Calu3 (cell line): ENCODE measurements at regions of chr1 and their contacts with region 1.

Region 1: GRCh38 chr1:234963180-234963903 is 165.3 kb downstream of the TOMM20 start:
- DNase-seq: peak; percentile 89
- H3K4me3 Mint-ChIP-seq: peak overlapping the region; percentile 15
- H3K27ac Mint-ChIP-seq: peak overlapping the region; percentile 86
- H3K4me1 Mint-ChIP-seq: peaks cover 73% of the 10 kb centered on the region
- H3K27me3 Mint-ChIP-seq: no peaks in the 10 kb centered on the region
- CTCF ChIP-seq: no peak

Region 2: GRCh38 chr1:234610348-234611152 is 352.8 kb before region 1 on chr1:
- CTCF ChIA-PET with region 1: interaction called, 3 read pairs
- intact Hi-C with region 1: loop called (anchors 2 kb)
- DNase-seq: peak; percentile 96
- H3K4me3 Mint-ChIP-seq: peak overlapping the region; percentile 89
- H3K27ac Mint-ChIP-seq: peak overlapping the region; percentile 97
- H3K4me1 Mint-ChIP-seq: peaks cover 53% of the 10 kb centered on the region
- H3K27me3 Mint-ChIP-seq: no peaks in the 10 kb centered on the region
- CTCF ChIP-seq: no peak

Region 3: GRCh38 chr1:234875953-234876855 is 87.1 kb before region 1 on chr1:
- CTCF ChIA-PET with region 1: no interaction called
- intact Hi-C with region 1: loop called (anchors 5 kb)
- DNase-seq: peak; percentile 42
- H3K4me3 Mint-ChIP-seq: no peak overlapping the region
- H3K27ac Mint-ChIP-seq: peak overlapping the region; percentile 36
- H3K4me1 Mint-ChIP-seq: peaks cover 52% of the 10 kb centered on the region
- H3K27me3 Mint-ChIP-seq: no peaks in the 10 kb centered on the region
- CTCF ChIP-seq: no peak

Region 4: DNA sequence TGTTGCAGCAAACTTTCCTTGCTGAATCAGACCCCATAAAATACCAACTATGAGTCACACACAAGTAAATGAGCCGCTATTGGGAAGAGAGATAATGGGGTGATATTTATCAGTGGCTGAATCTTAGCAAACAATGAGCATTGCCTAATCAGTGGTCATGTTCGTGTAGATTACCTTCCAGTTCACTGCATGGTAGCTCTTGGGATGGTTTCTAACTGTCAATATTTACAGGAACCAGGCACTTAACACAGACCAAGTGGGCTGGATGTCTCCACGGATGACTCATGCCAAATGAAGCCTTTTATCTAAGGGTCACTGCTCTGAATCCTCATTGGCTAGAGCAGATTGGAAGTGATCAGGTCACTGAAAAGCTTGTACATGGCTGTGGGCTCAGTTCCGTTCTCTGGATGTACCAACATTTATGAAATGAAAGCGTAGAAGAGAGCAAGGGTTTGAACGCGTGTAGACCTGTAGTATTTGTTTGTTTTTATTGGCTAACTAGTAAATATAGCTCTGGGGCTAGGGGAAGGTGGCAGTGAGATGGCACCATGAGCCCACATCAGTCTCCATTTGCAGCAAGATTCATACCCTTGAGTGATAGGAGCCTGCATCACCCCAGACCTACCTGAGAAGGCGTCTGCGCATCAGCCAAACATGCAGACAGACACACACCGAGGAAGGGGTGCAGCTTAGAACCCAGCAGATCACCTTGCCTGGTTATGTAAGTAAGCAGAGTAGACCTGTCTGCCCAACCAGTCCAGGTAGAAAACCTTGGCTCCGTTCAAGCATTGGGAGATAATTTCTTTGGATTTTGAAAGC is 12.0 kb after region 1 on chr1:
- CTCF ChIA-PET with region 1: interaction called, 13 read pairs
- intact Hi-C with region 1: no loop called
- DNase-seq: no peak
- H3K4me3 Mint-ChIP-seq: no peak overlapping the region
- H3K27ac Mint-ChIP-seq: peak overlapping the region; percentile 47
- H3K4me1 Mint-ChIP-seq: peaks cover 71% of the 10 kb centered on the region
- H3K27me3 Mint-ChIP-seq: no peaks in the 10 kb centered on the region
- CTCF ChIP-seq: no peak

Region 5: GRCh38 chr1:235006132-235006943 is 43.0 kb after region 1 on chr1:
- CTCF ChIA-PET with region 1: no interaction called
- intact Hi-C with region 1: no loop called
- DNase-seq: no peak
- H3K4me3 Mint-ChIP-seq: no peak overlapping the region
- H3K27ac Mint-ChIP-seq: no peak overlapping the region
- H3K4me1 Mint-ChIP-seq: peaks cover 5% of the 10 kb centered on the region
- H3K27me3 Mint-ChIP-seq: no peaks in the 10 kb centered on the region
- CTCF ChIP-seq: no peak

Region 6: DNA sequence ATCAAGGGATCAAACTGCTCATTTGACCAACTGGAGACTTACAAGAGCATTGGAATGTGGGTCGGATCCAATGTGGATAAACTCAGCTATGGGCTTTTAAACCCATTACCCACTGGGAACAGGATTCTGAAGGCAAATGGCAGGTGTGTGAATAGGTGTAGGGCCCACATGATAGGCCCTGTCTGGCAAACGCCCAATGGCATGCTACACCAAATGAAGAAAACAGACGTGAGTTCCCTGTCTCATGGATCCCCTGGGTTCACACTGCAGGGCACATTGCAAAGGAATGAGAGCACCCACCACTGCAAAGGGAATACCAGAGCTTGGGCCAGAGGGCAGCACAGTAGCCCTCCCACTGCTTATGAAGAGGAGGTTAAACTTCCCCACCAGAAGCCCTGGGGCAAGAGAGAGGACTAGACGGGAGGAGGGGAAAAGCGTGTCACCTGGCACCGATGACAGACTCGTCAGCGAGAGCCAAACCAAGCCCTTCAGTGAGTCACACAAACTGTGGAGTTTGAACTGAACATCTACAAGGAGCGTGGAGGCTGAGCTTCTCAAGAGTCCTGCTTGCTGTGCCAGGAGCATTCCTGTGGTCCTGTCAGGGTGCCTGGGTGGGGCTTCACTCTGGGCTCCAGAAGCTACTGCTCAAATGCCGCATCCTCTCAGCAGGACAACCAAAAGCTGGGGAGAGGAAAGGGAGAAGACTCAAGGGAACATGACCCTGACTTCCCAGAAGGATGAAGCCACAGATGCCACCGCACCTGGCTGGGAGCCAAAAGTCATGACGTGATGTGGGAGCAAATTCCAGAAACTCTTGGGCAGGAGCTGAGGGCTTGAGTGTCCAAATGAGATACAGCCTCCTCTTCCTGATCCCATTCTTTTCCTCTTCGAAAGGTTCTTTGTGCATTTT is 104.2 kb after region 1 on chr1:
- CTCF ChIA-PET with region 1: interaction called, 9 read pairs
- intact Hi-C with region 1: loop called (anchors 1 kb)
- DNase-seq: peak; percentile 95
- H3K4me3 Mint-ChIP-seq: peak overlapping the region; percentile 47
- H3K27ac Mint-ChIP-seq: peak overlapping the region; percentile 90
- H3K4me1 Mint-ChIP-seq: peaks cover 72% of the 10 kb centered on the region
- H3K27me3 Mint-ChIP-seq: no peaks in the 10 kb centered on the region
- CTCF ChIP-seq: no peak